Gastrocnemius medialis (tissue), 4 donors: ENCODE measurements at regions of chr5 and their contacts with region 1.

Region 1: DNA sequence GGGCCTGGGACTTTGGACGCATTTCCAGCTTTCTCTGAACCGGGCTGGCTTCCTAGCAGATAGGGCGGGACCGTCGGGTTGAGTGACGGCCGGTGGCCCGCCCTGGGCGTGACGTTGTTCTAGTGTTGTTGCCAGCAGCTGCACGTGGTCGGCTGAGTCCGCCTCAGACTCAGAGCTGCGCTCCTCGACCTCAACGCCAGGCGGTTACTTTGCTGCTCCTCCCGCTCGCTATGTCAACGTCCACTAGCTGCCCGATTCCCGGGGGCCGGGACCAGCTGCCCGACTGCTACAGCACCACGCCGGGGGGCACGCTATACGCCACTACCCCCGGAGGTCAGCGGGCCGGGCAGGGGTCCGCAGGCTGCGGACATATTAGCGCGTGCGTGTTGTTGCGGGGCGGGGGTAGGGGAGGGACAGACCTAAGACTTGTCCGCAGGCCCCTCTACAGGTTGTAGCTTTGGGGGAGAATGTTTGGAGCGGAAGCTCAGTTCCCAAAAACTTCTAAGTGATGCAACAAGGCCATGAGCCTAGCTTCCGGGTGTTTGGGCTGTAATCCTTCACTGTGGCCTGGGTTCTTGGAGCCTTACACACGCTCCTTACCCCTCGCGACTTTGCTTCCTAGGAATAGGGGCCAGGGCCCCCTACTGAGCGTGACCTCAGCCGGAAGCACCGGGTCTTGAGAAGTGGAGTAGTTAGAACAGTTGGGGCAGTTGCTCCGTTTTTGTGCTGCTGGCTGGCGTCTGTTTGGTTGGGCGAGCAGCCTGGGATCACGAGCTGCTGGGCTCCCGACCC is at the start of gene EIF4EBP3:
- DNase-seq: peak; percentile 96 to 98
- ATAC-seq: peak; percentile 71 to 75
- H3K4me3 ChIP-seq: peak within 1 kb of the TSS; percentile 54 to 79 (median 78)
- H3K27ac ChIP-seq: peak within 1 kb of the TSS; percentile 92 to 100 (median 100)
- H3K4me1 ChIP-seq: peaks cover 46 to 52% of the 10 kb centered on the region in 2 donors
- H3K27me3 ChIP-seq: no peaks in the 10 kb centered on the region
- CTCF ChIP-seq: peak; percentile 64 to 95 (median 80)
- POLR2A ChIP-seq: peak; percentile 92 to 98
- total RNA-seq, gene EIF4EBP3: 38.6 to 118 (median 51.8) TPM

Region 2: DNA sequence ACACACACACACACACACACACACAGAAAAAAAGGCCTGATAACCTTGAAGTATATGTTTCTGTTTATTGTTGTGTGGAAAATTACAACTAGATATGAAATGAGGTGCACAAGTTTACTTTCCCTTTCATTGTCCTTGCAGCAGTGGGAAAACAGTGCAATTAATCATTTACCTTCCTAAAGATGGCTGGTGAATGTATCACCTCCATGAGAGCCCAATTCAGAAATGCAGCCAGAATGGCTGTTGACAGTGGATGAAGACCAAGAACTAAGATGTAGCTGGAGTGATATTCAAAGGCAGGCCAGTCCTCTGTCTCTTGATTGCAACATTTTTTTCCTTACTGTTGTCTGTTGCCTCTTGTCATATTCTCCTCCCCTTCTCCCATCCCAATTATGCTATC is 49.8 kb before region 1 on chr5:
- in situ Hi-C with region 1: no loop called
- intact Hi-C with region 1: loop called (anchors 2 kb)
- DNase-seq: no peak
- ATAC-seq: no peak
- H3K4me3 ChIP-seq: no peak overlapping the region
- H3K27ac ChIP-seq: no peak overlapping the region
- H3K4me1 ChIP-seq: no peaks in the 10 kb centered on the region
- H3K27me3 ChIP-seq: no peaks in the 10 kb centered on the region
- CTCF ChIP-seq: no peak
- POLR2A ChIP-seq: no peak

Region 3: DNA sequence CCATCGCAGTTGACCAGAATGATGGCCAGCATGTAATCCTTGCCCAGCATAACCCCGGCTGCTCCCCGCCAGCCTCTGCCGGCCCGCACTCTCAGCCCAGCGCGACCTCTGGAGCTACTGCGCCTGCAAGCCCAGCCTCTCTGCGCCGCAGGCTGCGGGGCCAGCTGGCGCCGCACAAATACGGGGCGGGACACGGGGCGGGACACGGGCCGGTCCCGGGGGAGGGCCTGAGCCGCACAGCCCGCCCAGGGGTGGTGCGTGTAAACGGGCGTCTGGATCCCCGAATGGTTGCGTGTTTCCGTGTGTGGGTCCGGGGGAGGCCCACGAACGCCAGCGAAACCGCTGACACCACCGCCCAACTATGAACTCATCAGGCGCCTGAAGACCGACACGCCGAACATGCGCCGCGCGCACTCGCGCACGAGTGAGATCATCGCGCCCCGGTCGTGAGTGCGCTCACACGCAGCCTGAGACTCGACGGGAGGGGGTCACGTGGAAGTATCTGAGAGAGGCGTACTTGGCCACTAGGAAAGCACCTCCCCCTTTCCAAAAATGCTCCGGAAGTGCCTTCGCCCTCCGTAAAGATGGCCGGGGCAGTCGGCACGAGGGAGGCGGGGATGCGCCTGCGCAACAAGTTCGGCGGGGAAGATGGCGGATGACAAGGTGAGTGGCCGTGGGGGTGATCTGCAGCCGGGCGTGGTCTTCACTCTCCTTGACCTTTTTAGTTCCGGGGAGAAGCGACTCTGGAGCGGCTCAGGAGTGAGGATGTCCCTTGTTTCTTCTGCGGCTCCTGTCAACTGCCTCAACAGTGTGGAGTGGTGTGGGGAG is 16.7 kb after region 1 on chr5 and contains the starts of genes APBB3 and SLC35A4:
- in situ Hi-C with region 1: no loop called
- intact Hi-C with region 1: loop called (anchors 1 kb)
- DNase-seq: peak; percentile 98 to 99
- ATAC-seq: peak; percentile 85 to 92
- H3K4me3 ChIP-seq: peak within 1 kb of the TSS; percentile 77 to 92 (median 84)
- H3K27ac ChIP-seq: peak within 1 kb of the TSS; percentile 97 to 99 (median 98)
- H3K4me1 ChIP-seq: peaks cover 62% of the 10 kb centered on the region in 2 donors
- H3K27me3 ChIP-seq: no peaks in the 10 kb centered on the region
- CTCF ChIP-seq: no peak
- POLR2A ChIP-seq: peak; percentile 92
- total RNA-seq, gene APBB3: 4.1 to 12.5 (median 9.0) TPM
- total RNA-seq, gene SLC35A4: 71.7 to 152 (median 114) TPM

Region 4: DNA sequence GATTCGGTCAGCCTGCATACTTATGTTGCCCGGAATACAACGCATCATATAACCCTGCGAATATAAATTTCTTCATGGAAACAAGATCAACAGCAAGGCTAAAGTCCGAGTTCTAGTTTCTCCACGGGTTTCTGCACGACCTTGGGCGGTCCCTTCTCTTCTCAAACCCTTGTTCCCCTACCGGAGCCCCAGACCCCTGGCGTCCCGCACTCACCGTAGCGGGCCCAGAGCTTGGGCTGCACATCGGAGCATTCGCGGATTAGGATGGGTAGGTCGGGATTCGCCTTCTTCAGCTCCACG is 99.3 kb after region 1 on chr5:
- in situ Hi-C with region 1: loop called in 2 of 4 experiments (anchors 10 kb)
- intact Hi-C with region 1: no loop called
- DNase-seq: no peak
- ATAC-seq: peak; percentile 6 to 27
- H3K4me3 ChIP-seq: peak overlapping the region; percentile 81 to 96 (median 90)
- H3K27ac ChIP-seq: peak overlapping the region; percentile 85 to 94 (median 92)
- H3K4me1 ChIP-seq: peaks cover 19 to 20% of the 10 kb centered on the region in 2 donors
- H3K27me3 ChIP-seq: no peaks in the 10 kb centered on the region
- CTCF ChIP-seq: no peak
- POLR2A ChIP-seq: no peak

Region 5: GRCh38 chr5:140700177-140701144 is 152.8 kb after region 1 on chr5 and contains the start of gene ZMAT2:
- in situ Hi-C with region 1: no loop called
- intact Hi-C with region 1: loop called (anchors 5 kb)
- DNase-seq: peak; percentile 92 to 96
- ATAC-seq: peak; percentile 100
- H3K4me3 ChIP-seq: peak within 1 kb of the TSS; percentile 66 to 98 (median 80)
- H3K27ac ChIP-seq: peak within 1 kb of the TSS; percentile 79 to 89 (median 82)
- H3K4me1 ChIP-seq: peaks cover 15 to 16% of the 10 kb centered on the region in 2 donors
- H3K27me3 ChIP-seq: no peaks in the 10 kb centered on the region
- CTCF ChIP-seq: no peak
- POLR2A ChIP-seq: peak; percentile 84 to 87
- total RNA-seq, gene ZMAT2: 44.2 to 56.5 (median 51.9) TPM